ENCODE measurements at regions of chr13 and their contacts with region 1.

Region 1: GRCh38 chr13:31742097-31742734 is 2.9 kb downstream of the RXFP2 start:
- DNase-seq: peak; percentile 69
- ATAC-seq: peak; percentile 96
- H3K4me3 ChIP-seq: peak overlapping the region; percentile 25; the same call in 1 of the 2 replicates
- H3K27ac ChIP-seq: no peak overlapping the region
- H3K4me1 ChIP-seq: no peaks in the 10 kb centered on the region
- H3K27me3 ChIP-seq: no peaks in the 10 kb centered on the region
- CTCF ChIP-seq: peak; percentile 96
- POLR2A ChIP-seq: no peak
- RAD21 ChIP-seq: peak; percentile 91

Region 2: DNA sequence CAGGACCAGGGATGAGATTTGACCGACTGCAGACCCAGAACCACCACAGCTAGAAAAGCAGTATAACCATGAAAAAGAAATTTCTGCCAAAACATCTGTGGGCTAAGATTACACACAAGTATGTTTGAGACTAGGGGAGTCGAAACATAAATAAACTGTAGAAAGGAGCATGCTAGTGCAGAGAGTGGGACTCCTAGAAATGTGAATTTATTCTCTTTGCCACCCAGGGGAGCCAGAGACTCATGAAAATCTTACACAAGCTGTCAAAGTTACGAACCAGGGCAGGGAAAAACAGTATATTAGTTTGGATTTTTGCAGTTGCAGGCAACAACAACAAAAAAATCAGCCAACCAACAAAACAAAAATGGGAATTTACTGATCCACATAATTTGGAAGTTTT is 568.2 kb before region 1 on chr13:
- CTCF ChIA-PET with region 1: no interaction called
- POLR2A ChIA-PET with region 1: no interaction called
- dilution Hi-C with region 1: no loop called
- in situ Hi-C with region 1: no loop called
- intact Hi-C with region 1: loop called (anchors 1 kb)
- DNase-seq: peak; percentile 77
- ATAC-seq: peak; percentile 85
- H3K4me3 ChIP-seq: no peak overlapping the region
- H3K27ac ChIP-seq: no peak overlapping the region
- H3K4me1 ChIP-seq: peaks cover 2% of the 10 kb centered on the region
- H3K27me3 ChIP-seq: no peaks in the 10 kb centered on the region
- CTCF ChIP-seq: peak; percentile 64
- POLR2A ChIP-seq: no peak
- RAD21 ChIP-seq: peak; percentile 67

Region 3: GRCh38 chr13:31236211-31236786 is 505.9 kb before region 1 on chr13:
- CTCF ChIA-PET with region 1: interaction called, 3 read pairs
- POLR2A ChIA-PET with region 1: no interaction called
- dilution Hi-C with region 1: no loop called
- in situ Hi-C with region 1: loop called (anchors 25 kb)
- intact Hi-C with region 1: loop called (anchors 2 kb)
- DNase-seq: peak; percentile 54
- ATAC-seq: peak; percentile 82
- H3K4me3 ChIP-seq: no peak overlapping the region
- H3K27ac ChIP-seq: no peak overlapping the region
- H3K4me1 ChIP-seq: no peaks in the 10 kb centered on the region
- H3K27me3 ChIP-seq: no peaks in the 10 kb centered on the region
- CTCF ChIP-seq: peak; percentile 77
- POLR2A ChIP-seq: no peak
- RAD21 ChIP-seq: peak; percentile 71

Region 4: DNA sequence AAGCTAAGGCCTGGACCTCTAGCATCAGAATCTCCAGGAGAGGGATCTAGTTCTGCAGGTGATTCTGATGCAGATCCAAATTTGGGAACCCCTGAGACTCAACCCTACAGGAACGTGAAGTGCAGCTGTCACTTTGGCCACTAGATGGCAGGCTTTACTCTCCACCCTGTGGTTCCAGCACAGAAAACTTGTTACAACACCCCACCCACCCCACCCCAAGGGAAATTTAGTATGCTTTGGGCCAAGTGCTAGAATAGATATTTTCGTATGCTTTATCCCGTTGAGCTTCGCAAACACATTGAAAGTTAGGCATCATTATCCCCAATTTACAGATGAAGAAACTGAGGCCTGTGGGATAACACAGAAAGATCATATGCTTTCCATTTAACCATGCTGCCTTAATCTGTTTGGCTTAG is 310.5 kb before region 1 on chr13:
- CTCF ChIA-PET with region 1: no interaction called
- POLR2A ChIA-PET with region 1: no interaction called
- dilution Hi-C with region 1: no loop called
- in situ Hi-C with region 1: loop called (anchors 10 kb)
- intact Hi-C with region 1: loop called (anchors 1 kb)
- DNase-seq: peak; percentile 28
- ATAC-seq: peak; percentile 67; the same call in 1 of the 2 replicates
- H3K4me3 ChIP-seq: no peak overlapping the region
- H3K27ac ChIP-seq: no peak overlapping the region
- H3K4me1 ChIP-seq: no peaks in the 10 kb centered on the region
- H3K27me3 ChIP-seq: peaks cover 28% of the 10 kb centered on the region
- CTCF ChIP-seq: peak; percentile 61
- POLR2A ChIP-seq: no peak
- RAD21 ChIP-seq: peak; percentile 61

Region 5: GRCh38 chr13:31538067-31539042 is 203.9 kb before region 1 on chr13:
- CTCF ChIA-PET with region 1: interaction called, 12 read pairs
- POLR2A ChIA-PET with region 1: no interaction called
- dilution Hi-C with region 1: no loop called
- in situ Hi-C with region 1: loop called (anchors 10 kb)
- intact Hi-C with region 1: loop called (anchors 1 kb)
- DNase-seq: peak; percentile 45
- ATAC-seq: peak; percentile 87
- H3K4me3 ChIP-seq: no peak overlapping the region
- H3K27ac ChIP-seq: no peak overlapping the region
- H3K4me1 ChIP-seq: no peaks in the 10 kb centered on the region
- H3K27me3 ChIP-seq: no peaks in the 10 kb centered on the region; the same call in 1 of the 2 replicates
- CTCF ChIP-seq: peak; percentile 58
- POLR2A ChIP-seq: no peak
- RAD21 ChIP-seq: peak; percentile 62

Region 6: DNA sequence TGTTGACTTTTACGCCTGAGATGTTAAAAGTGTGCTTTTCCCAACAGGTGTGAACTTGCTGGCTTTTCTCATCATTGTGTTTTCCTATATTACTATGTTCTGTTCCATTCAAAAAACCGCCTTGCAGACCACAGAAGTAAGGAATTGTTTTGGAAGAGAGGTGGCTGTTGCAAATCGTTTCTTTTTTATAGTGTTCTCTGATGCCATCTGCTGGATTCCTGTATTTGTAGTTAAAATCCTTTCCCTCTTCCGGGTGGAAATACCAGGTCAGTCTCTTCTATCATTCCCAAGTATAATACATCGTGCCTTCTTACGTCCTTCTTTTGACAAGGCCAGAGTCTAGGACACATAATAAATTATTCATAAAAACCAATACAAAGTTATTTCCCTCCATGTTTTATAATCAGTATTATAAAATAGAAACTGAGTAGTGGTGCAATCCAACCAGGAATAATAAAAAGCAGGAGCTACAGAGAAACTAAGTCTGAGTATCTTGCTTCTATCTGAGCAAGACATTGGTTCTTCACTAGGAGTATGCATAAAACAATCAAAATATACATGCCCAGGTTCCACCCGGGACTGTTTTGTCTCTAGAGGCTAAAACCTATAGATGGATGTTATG is 55.0 kb after region 1 on chr13:
- CTCF ChIA-PET with region 1: no interaction called
- POLR2A ChIA-PET with region 1: no interaction called
- dilution Hi-C with region 1: no loop called
- in situ Hi-C with region 1: no loop called
- intact Hi-C with region 1: loop called (anchors 2 kb)
- DNase-seq: peak; percentile 55
- ATAC-seq: peak; percentile 82
- H3K4me3 ChIP-seq: no peak overlapping the region
- H3K27ac ChIP-seq: no peak overlapping the region
- H3K4me1 ChIP-seq: no peaks in the 10 kb centered on the region
- H3K27me3 ChIP-seq: peaks cover 8% of the 10 kb centered on the region
- CTCF ChIP-seq: peak; percentile 69
- POLR2A ChIP-seq: no peak
- RAD21 ChIP-seq: peak; percentile 76

Measured in IMR-90 (cell line).